IMR-90 (cell line): ENCODE measurements at regions of chr1 and their contacts with region 1.

Region 1: DNA sequence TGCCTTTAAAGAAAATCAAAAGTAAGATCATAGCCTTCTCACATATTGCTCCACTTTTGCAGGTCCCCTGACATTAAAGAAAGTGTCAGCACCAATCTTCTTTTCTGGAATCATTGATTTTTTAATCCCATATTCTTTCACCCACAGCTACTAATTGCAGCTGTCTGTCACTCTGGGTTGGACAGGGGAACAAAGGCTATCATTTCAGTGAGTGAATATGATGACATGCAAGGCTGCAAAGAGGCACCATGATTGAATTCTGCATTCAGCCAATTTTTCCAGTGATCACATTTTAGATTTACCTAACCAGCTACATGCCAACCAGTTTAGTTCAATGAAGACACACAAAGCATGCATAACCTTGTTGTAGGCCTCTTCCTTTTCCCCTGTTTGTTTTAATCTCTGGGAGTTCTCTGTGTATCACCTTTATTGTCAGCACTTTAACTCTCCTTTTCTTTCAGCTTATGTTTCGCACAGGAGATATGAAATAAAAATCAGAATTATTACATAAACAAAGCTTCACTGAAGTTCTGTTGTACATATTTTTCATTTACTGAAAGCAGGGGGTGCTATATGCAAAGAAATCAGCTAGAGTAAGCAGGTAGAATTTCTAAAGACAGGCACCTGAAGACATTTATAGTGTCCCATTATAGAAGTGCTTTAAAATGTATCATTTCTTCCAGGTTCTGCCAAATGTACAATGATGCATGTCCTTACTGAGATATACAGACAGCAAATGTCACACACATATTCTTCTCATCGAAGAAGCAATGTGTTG is 584.8 kb downstream of the PLA2G4A start:
- DNase-seq: peak; percentile 34
- ATAC-seq: no peak
- H3K4me3 ChIP-seq: no peak overlapping the region
- H3K27ac ChIP-seq: no peak overlapping the region
- H3K4me1 ChIP-seq: peaks cover 5% of the 10 kb centered on the region
- H3K27me3 ChIP-seq: no peaks in the 10 kb centered on the region
- CTCF ChIP-seq: peak; percentile 40
- POLR2A ChIP-seq: no peak
- RAD21 ChIP-seq: peak; percentile 66

Region 2: DNA sequence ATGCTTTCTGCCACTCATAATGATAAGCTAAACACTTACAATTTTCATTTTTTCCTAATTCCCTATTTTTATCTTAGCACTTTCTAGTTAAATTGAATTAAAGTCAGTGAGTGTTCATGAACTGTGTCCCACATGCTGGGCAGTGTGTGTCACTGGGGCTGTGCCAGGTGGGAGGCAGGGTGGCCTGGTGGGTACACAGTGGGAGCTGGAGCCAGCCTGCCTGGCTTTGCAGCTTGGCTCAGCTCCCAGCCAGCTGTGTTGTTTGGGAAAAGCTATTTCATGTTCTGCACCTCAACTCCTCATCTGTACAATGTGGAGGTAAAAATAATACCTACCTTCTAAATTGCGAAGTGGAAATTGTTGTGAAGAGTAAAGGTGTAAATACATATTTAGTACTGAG is 346.4 kb before region 1 on chr1:
- CTCF ChIA-PET with region 1: no interaction called
- POLR2A ChIA-PET with region 1: no interaction called
- dilution Hi-C with region 1: no loop called
- in situ Hi-C with region 1: no loop called
- intact Hi-C with region 1: no loop called
- DNase-seq: no peak
- ATAC-seq: no peak
- H3K4me3 ChIP-seq: no peak overlapping the region
- H3K27ac ChIP-seq: no peak overlapping the region
- H3K4me1 ChIP-seq: no peaks in the 10 kb centered on the region
- H3K27me3 ChIP-seq: no peaks in the 10 kb centered on the region
- CTCF ChIP-seq: no peak
- POLR2A ChIP-seq: no peak
- RAD21 ChIP-seq: no peak

Region 3: DNA sequence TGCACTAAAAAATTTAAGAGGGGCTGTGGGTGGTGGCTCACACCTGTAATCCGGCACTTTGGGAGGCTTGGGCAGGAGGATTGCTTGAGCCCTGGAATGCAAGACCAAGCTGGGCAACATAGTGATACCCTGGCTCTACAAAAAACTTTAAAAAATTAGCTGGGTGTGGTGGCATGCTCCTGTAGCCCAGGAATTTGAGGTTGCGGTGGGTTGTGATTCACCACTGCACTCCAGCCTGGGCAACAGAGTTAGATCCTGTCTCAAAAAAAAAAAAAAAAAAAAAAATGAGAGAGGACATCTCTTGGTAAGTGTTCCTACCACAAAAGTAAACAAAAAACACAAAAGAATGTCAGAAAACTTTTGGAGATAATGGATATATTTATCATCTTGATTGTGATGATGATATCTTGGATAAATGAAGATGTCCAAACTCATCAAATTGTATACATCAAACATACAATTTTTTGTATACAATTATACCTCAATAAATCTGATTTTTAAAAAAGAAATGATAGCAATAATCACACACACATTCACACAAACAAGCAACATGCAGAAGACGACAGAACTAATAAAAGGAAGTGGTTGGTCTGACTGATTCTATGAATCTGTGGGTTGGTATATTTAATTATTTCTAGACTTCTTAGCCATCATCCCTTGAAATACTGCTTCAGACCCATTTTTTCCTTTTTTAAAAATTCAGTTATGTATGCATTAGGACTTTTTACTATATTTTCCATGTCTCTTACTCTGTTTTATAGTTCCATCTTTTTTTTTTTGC is 119.0 kb before region 1 on chr1:
- CTCF ChIA-PET with region 1: no interaction called
- POLR2A ChIA-PET with region 1: no interaction called
- dilution Hi-C with region 1: no loop called
- in situ Hi-C with region 1: no loop called
- intact Hi-C with region 1: no loop called
- DNase-seq: no peak
- ATAC-seq: no peak
- H3K4me3 ChIP-seq: no peak overlapping the region
- H3K27ac ChIP-seq: no peak overlapping the region
- H3K4me1 ChIP-seq: no peaks in the 10 kb centered on the region
- H3K27me3 ChIP-seq: no peaks in the 10 kb centered on the region
- CTCF ChIP-seq: no peak
- POLR2A ChIP-seq: no peak
- RAD21 ChIP-seq: no peak

Region 4: DNA sequence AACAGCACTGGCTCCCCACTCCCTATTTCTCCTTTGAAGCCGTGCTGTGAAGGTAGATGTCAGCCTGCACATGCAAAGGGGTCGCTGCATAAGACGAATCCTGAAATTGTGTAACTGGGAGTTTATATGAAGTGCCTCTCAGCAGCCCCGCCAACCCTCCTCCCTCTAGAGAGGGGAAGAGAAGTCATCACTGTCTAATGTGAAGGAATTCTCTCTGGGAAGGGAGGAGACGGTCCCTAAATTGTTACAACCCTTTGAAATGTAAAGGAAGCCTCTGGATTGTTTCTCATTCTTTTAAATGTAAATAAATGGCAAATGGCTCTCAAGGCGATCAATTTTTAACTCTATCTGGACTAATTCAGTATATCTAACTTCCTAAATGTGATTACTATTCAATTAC is 39.5 kb before region 1 on chr1:
- CTCF ChIA-PET with region 1: no interaction called
- POLR2A ChIA-PET with region 1: no interaction called
- dilution Hi-C with region 1: no loop called
- in situ Hi-C with region 1: no loop called
- intact Hi-C with region 1: no loop called
- DNase-seq: no peak
- ATAC-seq: no peak
- H3K4me3 ChIP-seq: no peak overlapping the region
- H3K27ac ChIP-seq: no peak overlapping the region
- H3K4me1 ChIP-seq: no peaks in the 10 kb centered on the region
- H3K27me3 ChIP-seq: no peaks in the 10 kb centered on the region
- CTCF ChIP-seq: no peak
- POLR2A ChIP-seq: no peak
- RAD21 ChIP-seq: no peak

Region 5: DNA sequence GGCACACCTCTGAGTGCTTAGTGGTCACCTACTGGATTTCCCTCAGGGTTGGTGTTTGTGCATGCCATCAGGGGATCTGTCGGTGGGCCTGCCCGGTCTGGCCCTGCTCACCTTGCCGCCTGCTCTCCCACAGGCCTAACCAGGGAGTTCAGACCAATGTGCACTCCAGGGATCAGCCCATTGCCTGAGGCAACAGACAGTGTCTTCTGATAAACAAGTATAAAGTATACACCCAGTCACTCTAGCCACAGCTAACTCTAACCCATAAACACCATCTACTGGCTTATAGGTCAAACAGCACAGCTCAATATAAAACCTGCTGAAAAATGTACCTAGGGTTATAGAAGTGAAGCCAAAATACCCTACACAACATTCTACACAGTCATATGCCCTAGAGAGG is 715.2 kb after region 1 on chr1:
- CTCF ChIA-PET with region 1: no interaction called
- POLR2A ChIA-PET with region 1: no interaction called
- dilution Hi-C with region 1: no loop called
- in situ Hi-C with region 1: no loop called
- intact Hi-C with region 1: loop called (anchors 2 kb)
- DNase-seq: peak; percentile 41
- ATAC-seq: peak; percentile 85
- H3K4me3 ChIP-seq: no peak overlapping the region
- H3K27ac ChIP-seq: no peak overlapping the region
- H3K4me1 ChIP-seq: no peaks in the 10 kb centered on the region
- H3K27me3 ChIP-seq: no peaks in the 10 kb centered on the region
- CTCF ChIP-seq: peak; percentile 46
- POLR2A ChIP-seq: no peak
- RAD21 ChIP-seq: peak; percentile 51

Region 6: DNA sequence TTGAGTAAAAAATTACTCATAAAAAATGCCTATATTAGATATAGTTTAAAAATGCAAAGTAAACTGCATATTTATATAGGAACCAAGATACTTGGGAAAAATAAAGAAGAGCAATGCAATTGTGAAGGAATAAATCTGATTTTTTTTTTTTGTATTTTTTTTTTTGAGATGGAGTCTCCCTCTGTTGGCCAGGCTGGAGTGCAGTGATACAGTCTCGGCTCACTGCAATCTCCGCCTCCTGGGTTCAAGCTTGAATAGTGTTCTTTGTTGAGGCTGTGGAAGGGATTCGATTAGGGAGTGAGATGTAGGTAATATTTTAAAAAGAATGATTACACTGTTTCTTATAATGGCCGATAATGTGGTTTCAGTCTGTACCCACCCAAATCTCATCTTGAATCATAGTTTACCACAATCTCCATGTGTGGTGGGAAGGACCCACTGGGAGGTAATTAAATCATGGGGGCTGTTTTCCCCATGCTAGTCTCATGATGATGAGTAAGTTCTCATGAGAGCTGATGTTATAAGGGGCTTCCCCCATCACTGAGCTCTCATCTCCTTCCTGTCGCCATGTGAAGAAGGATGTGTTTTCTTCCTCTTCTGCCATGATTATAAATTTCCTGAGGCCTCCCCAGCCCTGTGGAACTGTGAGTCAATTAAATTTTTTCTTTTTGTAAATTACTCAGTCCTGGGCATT is 1181.1 kb after region 1 on chr1:
- CTCF ChIA-PET with region 1: no interaction called
- POLR2A ChIA-PET with region 1: no interaction called
- dilution Hi-C with region 1: no loop called
- in situ Hi-C with region 1: no loop called
- intact Hi-C with region 1: loop called (anchors 5 kb)
- DNase-seq: no peak
- ATAC-seq: no peak
- H3K4me3 ChIP-seq: no peak overlapping the region
- H3K27ac ChIP-seq: no peak overlapping the region
- H3K4me1 ChIP-seq: no peaks in the 10 kb centered on the region
- H3K27me3 ChIP-seq: no peaks in the 10 kb centered on the region
- CTCF ChIP-seq: no peak
- POLR2A ChIP-seq: no peak
- RAD21 ChIP-seq: no peak